ENCODE measurements at regions of chr12 and their contacts with region 1.

Region 1: GRCh38 chr12:43805860-43806736 is at the start of gene TWF1:
- DNase-seq: peak; percentile 69 to 93 (median 83)
- ATAC-seq: peak; percentile 85
- H3K4me3 ChIP-seq: peak within 1 kb of the TSS; percentile 85 to 88
- H3K4me3 Mint-ChIP-seq: peak within 1 kb of the TSS; percentile 100
- H3K27ac ChIP-seq: peak within 1 kb of the TSS; percentile 94 to 97
- H3K27ac Mint-ChIP-seq: peak within 1 kb of the TSS; percentile 100
- H3K4me1 ChIP-seq: peaks cover 36% of the 10 kb centered on the region
- H3K4me1 Mint-ChIP-seq: peaks cover 42% of the 10 kb centered on the region
- H3K27me3 ChIP-seq: no peaks in the 10 kb centered on the region
- H3K27me3 Mint-ChIP-seq: no peaks in the 10 kb centered on the region
- CTCF ChIP-seq: no peak
- total RNA-seq, gene TWF1: 74.1 to 82.2 TPM

Region 2: DNA sequence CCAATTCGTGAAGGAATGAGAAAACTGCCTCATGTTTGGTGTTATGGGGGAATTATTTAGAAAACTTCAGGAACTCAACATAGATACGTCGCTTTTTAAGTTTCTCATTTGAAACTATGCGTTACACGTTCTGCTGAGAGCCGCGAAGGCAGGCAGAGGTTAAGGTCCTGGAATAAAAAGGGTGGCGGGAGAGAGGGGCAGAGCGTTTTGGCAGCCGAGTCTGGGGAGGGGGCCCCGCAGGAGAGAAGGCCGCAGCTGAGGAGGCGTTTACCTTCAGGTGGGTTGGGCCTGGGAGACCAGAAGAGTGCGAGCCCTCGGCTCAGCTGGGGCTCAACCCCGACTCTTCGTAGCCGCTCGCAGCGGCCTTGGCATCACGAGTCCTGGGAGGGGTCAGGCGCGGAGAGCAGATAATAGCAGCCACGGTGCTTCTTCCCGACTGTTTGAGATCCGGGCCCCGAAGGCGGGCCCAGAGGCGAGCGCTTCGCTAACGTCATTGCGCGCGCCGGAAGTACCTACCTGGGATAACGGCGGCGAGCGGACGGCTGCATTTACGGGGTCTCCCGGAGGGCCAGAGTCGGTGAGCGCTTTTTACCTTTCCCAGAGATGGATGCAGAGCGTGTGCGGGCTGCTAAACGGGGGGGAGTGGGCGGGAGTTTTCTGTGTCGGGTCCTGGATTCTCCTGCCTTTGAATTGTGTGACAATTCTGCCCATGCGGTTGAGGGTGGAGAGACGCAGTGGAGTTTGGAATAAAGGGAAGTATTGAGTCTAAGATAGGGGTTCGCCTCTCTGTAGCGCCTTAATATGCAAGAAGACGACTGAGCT is 1480.2 kb before region 1 on chr12 and contains the starts of genes PPHLN1 and ZCRB1:
- CTCF ChIA-PET with region 1: no interaction called
- POLR2A ChIA-PET with region 1: no interaction called
- intact Hi-C with region 1: loop called (anchors 10 kb)
- DNase-seq: peak; percentile 54 to 89 (median 78)
- ATAC-seq: peak; percentile 89
- H3K4me3 ChIP-seq: peak within 1 kb of the TSS; percentile 68 to 95
- H3K4me3 Mint-ChIP-seq: peak within 1 kb of the TSS; percentile 98
- H3K27ac ChIP-seq: peak within 1 kb of the TSS; percentile 79 to 91
- H3K27ac Mint-ChIP-seq: peak within 1 kb of the TSS; percentile 98
- H3K4me1 ChIP-seq: peaks cover 24% of the 10 kb centered on the region
- H3K4me1 Mint-ChIP-seq: peaks cover 54% of the 10 kb centered on the region
- H3K27me3 ChIP-seq: no peaks in the 10 kb centered on the region
- H3K27me3 Mint-ChIP-seq: no peaks in the 10 kb centered on the region
- CTCF ChIP-seq: no peak
- total RNA-seq, gene PPHLN1: 104 to 108 TPM
- total RNA-seq, gene ZCRB1: 35.7 to 39.4 TPM

Region 3: GRCh38 chr12:43758728-43759563 is 47.2 kb before region 1 on chr12 and contains the starts of genes IRAK4 and PUS7L:
- CTCF ChIA-PET with region 1: interaction called, 4 read pairs
- POLR2A ChIA-PET with region 1: interaction called, 28 read pairs
- intact Hi-C with region 1: loop called (anchors 1 kb)
- DNase-seq: peak; percentile 89 to 99 (median 95)
- ATAC-seq: peak; percentile 95
- H3K4me3 ChIP-seq: peak within 1 kb of the TSS; percentile 71 to 79
- H3K4me3 Mint-ChIP-seq: peak within 1 kb of the TSS; percentile 95
- H3K27ac ChIP-seq: peak within 1 kb of the TSS; percentile 80 to 96
- H3K27ac Mint-ChIP-seq: peak within 1 kb of the TSS; percentile 99
- H3K4me1 ChIP-seq: peaks cover 45% of the 10 kb centered on the region
- H3K4me1 Mint-ChIP-seq: peaks cover 77% of the 10 kb centered on the region
- H3K27me3 ChIP-seq: no peaks in the 10 kb centered on the region
- H3K27me3 Mint-ChIP-seq: no peaks in the 10 kb centered on the region
- CTCF ChIP-seq: no peak
- total RNA-seq, gene IRAK4: 19.6 to 22.3 TPM
- total RNA-seq, gene PUS7L: 10.3 to 12.6 TPM

Region 4: DNA sequence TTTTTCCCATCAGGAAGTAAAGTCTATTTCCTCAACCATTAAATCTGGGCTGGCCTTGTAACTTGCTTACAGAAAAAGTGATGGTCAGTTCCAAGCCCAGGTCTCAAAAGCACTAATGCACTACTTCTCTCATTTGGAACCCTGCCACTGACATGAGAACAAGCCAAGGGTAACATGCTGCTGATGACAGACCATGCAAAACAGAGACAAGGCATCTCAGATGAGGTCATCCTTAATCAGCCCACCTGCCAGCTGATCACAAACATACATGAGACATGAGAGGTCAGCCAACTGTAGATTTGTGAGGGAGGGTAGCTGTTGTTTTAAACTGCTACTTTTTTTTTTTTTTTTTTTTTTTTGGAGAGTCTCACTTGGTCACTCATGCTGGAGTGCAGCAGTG is 16.2 kb before region 1 on chr12:
- CTCF ChIA-PET with region 1: interaction called, 3 read pairs
- POLR2A ChIA-PET with region 1: interaction called, 10 read pairs
- intact Hi-C with region 1: loop called in 1 of 2 experiments (anchors 2 kb)
- DNase-seq: no peak
- ATAC-seq: no peak
- H3K4me3 ChIP-seq: no peak overlapping the region
- H3K4me3 Mint-ChIP-seq: no peak overlapping the region
- H3K27ac ChIP-seq: no peak overlapping the region
- H3K27ac Mint-ChIP-seq: no peak overlapping the region
- H3K4me1 ChIP-seq: no peaks in the 10 kb centered on the region
- H3K4me1 Mint-ChIP-seq: no peaks in the 10 kb centered on the region
- H3K27me3 ChIP-seq: no peaks in the 10 kb centered on the region
- H3K27me3 Mint-ChIP-seq: no peaks in the 10 kb centered on the region
- CTCF ChIP-seq: no peak

Region 5: DNA sequence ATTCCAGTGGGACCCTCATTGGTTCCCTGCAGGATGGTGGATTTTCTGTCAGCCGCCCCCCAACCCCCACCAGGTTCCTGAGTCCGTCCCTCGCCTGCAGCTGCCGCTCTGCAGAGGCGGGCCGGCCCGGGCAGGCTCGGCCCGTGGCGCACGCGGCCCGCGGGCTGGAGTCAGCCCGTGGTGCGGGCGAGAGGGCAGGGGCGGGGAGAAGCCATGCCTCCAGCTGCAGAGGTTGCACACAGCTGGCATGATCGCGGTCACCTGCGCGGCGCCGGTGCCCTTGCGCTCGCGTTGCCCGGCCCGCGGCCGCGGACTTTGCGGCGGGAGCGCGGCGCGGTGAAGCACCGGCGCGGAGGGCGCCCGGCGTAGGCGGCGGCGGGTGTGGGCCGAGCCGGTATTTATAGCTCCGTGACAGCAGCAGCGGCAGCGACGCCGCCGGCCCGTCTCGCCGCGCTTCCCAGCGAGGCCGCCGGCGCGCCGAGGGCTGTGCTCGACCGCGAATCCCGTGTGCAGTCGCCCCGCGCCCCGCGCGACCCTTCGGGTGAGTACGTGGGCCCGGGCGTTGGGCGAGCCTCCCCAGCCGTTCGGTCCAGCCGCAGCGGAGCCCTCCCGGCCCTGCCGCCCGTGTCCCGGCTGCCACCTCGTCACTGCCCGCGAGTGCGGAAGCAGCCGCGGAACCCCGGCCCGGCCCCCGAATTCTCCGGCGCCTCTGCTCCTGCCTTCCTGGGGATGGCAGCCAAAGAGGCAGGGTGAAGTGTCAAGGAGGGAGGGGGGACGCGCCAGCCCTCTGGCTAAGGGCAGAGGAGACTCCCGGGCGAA is 29.8 kb after region 1 on chr12 and contains the start of gene TMEM117:
- CTCF ChIA-PET with region 1: interaction called, 7 read pairs
- POLR2A ChIA-PET with region 1: interaction called, 30 read pairs
- intact Hi-C with region 1: loop called (anchors 1 kb)
- DNase-seq: peak; percentile 21 to 82 (median 65)
- ATAC-seq: peak; percentile 69
- H3K4me3 ChIP-seq: peak within 1 kb of the TSS; percentile 56 to 63
- H3K4me3 Mint-ChIP-seq: peak within 1 kb of the TSS; percentile 92
- H3K27ac ChIP-seq: peak within 1 kb of the TSS; percentile 64 to 78
- H3K27ac Mint-ChIP-seq: peak within 1 kb of the TSS; percentile 95
- H3K4me1 ChIP-seq: peaks cover 35% of the 10 kb centered on the region
- H3K4me1 Mint-ChIP-seq: peaks cover 52% of the 10 kb centered on the region
- H3K27me3 ChIP-seq: no peaks in the 10 kb centered on the region
- H3K27me3 Mint-ChIP-seq: no peaks in the 10 kb centered on the region
- CTCF ChIP-seq: no peak
- total RNA-seq, gene TMEM117: 3.5 to 4.0 TPM

Measured in CD8-positive, alpha-beta T cell (primary cell).